ENCODE measurements at regions of chr15 and their contacts with region 1.

Region 1: DNA sequence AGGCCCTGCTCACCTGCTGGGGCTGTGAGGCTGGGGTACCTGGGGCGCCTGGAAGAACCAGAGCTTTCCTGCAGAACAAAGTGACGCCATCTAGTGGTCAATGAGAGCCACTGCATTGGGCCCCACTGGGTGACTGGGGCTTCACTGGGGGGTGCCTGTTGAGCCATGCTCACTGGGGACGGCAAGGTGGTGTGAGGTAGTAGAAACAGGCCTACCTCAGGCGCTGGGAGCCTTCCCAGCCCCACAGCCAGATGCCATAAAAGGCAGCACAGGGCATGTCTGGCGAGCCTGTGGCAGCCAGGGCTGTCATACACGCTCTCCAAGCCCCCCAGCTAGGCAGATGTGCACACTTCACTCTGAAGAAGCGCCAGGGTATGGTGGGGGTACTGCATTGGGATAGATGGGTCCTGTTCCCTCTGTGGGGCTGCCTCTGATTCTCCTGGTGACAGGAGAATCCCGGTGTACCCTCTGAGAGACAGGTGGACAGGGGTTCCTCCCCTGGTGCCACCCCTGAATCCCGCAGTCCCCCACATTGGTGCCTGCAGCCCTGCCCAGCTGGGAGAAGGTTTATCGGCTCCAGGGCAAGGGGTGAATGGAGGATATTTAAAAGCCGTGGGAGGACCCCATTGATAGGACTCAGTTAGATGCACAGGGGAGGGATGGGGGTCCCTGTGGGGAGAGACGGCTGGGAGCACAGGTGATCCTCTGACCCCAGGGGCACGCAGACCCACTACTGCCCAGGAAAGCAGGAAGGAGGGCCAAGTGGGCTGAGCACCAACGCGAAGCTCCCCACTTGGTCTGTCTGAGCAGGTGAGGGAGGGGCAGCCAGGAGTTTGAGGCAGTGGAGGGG is 178.8 kb downstream of the NSMCE3 start:
- DNase-seq: peak in 1 of 2 experiments; percentile 85
- H3K4me3 ChIP-seq: no peak overlapping the region
- H3K27ac ChIP-seq: no peak overlapping the region
- H3K4me1 ChIP-seq: peaks cover 0 to 5% (median 2%) of the 10 kb centered on the region in 4 experiments; a peak in 2 of 7 replicates
- H3K27me3 ChIP-seq: no peaks in the 10 kb centered on the region
- CTCF ChIP-seq: peak; percentile 85 to 92 (median 86)
- EP300 ChIP-seq: no peak
- POLR2A ChIP-seq: no peak
- RAD21 ChIP-seq: peak; percentile 66 to 78

Region 2: DNA sequence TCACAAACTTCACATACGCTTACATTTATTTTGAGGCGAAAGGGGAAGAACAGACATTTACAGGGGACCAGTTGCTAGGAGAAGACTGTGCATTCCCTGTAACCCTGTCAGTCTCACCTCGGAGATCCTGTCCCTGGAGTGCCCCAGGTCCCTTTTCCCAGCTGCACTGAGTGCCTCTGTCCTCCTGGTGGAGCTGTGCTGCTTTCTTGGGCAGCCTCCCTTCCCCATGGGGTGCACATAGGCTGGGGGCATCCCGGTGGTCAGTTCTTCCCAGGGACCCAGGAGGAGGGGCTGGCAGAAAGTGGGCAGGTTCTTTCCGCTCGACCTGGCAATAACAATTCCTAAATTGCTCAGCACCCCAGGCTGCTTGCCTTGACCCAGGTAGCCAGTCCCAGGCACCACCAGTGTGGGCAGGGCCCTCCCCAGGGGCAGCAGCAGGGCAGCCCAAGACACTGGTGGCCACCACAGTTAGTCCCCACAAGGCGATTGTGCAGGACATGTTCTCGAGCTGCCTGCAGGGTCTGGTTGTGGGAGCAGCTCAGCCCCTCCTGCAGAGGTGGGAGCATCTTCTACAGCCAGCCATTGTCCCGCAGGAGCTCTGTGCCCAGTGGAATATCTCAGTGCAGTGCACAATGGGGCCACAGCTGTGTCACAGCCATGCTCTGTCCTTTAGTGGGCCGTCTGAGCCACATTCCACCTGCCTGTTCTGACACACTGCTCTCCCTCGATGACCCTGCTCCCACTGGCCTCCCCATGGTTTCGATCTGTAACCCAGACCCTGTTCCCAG is 168.7 kb before region 1 on chr15:
- CTCF ChIA-PET with region 1: interaction called, 50 read pairs
- POLR2A ChIA-PET with region 1: no interaction called
- DNase-seq: no peak
- H3K4me3 ChIP-seq: no peak overlapping the region
- H3K27ac ChIP-seq: no peak overlapping the region
- H3K4me1 ChIP-seq: peaks cover 0 to 12% (median 7%) of the 10 kb centered on the region in 4 experiments; a peak in 5 of 7 replicates
- H3K27me3 ChIP-seq: no peaks in the 10 kb centered on the region
- CTCF ChIP-seq: peak; percentile 85 to 89 (median 87)
- EP300 ChIP-seq: no peak
- POLR2A ChIP-seq: no peak
- RAD21 ChIP-seq: peak; percentile 80 to 83

Region 3: GRCh38 chr15:28975766-28976179 is 115.1 kb before region 1 on chr15:
- CTCF ChIA-PET with region 1: interaction called, 46 read pairs
- POLR2A ChIA-PET with region 1: no interaction called
- DNase-seq: peak; percentile 29 to 72
- H3K4me3 ChIP-seq: no peak overlapping the region
- H3K27ac ChIP-seq: no peak overlapping the region
- H3K4me1 ChIP-seq: no peaks in the 10 kb centered on the region
- H3K27me3 ChIP-seq: no peaks in the 10 kb centered on the region
- CTCF ChIP-seq: peak; percentile 83 to 92 (median 90)
- EP300 ChIP-seq: no peak
- POLR2A ChIP-seq: no peak
- RAD21 ChIP-seq: peak; percentile 79

Region 4: GRCh38 chr15:28998511-28998910 is 92.3 kb before region 1 on chr15:
- CTCF ChIA-PET with region 1: interaction called, 88 read pairs
- POLR2A ChIA-PET with region 1: no interaction called
- DNase-seq: no peak
- H3K4me3 ChIP-seq: no peak overlapping the region
- H3K27ac ChIP-seq: no peak overlapping the region
- H3K4me1 ChIP-seq: peaks cover 0 to 6% (median 4%) of the 10 kb centered on the region in 4 experiments; a peak in 4 of 7 replicates
- H3K27me3 ChIP-seq: no peaks in the 10 kb centered on the region
- CTCF ChIP-seq: peak; percentile 11 to 22 (median 17); a peak in 3 of 4 replicates
- EP300 ChIP-seq: no peak
- POLR2A ChIP-seq: no peak
- RAD21 ChIP-seq: peak; percentile 46 to 55

Region 5: GRCh38 chr15:29029651-29030195 is 61.1 kb before region 1 on chr15:
- CTCF ChIA-PET with region 1: interaction called, 18 read pairs
- POLR2A ChIA-PET with region 1: no interaction called
- DNase-seq: no peak
- H3K4me3 ChIP-seq: no peak overlapping the region
- H3K27ac ChIP-seq: no peak overlapping the region
- H3K4me1 ChIP-seq: peaks cover 0 to 8% (median 4%) of the 10 kb centered on the region in 4 experiments; a peak in 4 of 7 replicates
- H3K27me3 ChIP-seq: no peaks in the 10 kb centered on the region
- CTCF ChIP-seq: no peak
- EP300 ChIP-seq: no peak
- POLR2A ChIP-seq: no peak
- RAD21 ChIP-seq: no peak

Region 6: GRCh38 chr15:29070449-29071231 is 20.2 kb before region 1 on chr15:
- CTCF ChIA-PET with region 1: interaction called, 78 read pairs
- POLR2A ChIA-PET with region 1: no interaction called
- DNase-seq: no peak
- H3K4me3 ChIP-seq: no peak overlapping the region
- H3K27ac ChIP-seq: no peak overlapping the region
- H3K4me1 ChIP-seq: no peaks in the 10 kb centered on the region
- H3K27me3 ChIP-seq: no peaks in the 10 kb centered on the region
- CTCF ChIP-seq: no peak
- EP300 ChIP-seq: no peak
- POLR2A ChIP-seq: no peak
- RAD21 ChIP-seq: no peak

Region 7: GRCh38 chr15:29170521-29170920 is 79.7 kb after region 1 on chr15:
- CTCF ChIA-PET with region 1: no interaction called
- POLR2A ChIA-PET with region 1: no interaction called
- DNase-seq: no peak
- H3K4me3 ChIP-seq: no peak overlapping the region
- H3K27ac ChIP-seq: no peak overlapping the region
- H3K4me1 ChIP-seq: no peaks in the 10 kb centered on the region
- H3K27me3 ChIP-seq: no peaks in the 10 kb centered on the region
- CTCF ChIP-seq: no peak
- EP300 ChIP-seq: no peak
- POLR2A ChIP-seq: no peak
- RAD21 ChIP-seq: no peak

Region 8: GRCh38 chr15:29337156-29337959 is 246.5 kb after region 1 on chr15:
- CTCF ChIA-PET with region 1: no interaction called
- POLR2A ChIA-PET with region 1: no interaction called
- DNase-seq: no peak
- H3K4me3 ChIP-seq: no peak overlapping the region
- H3K27ac ChIP-seq: no peak overlapping the region
- H3K4me1 ChIP-seq: peaks cover 0 to 5% (median 4%) of the 10 kb centered on the region in 4 experiments; a peak in 5 of 7 replicates
- H3K27me3 ChIP-seq: no peaks in the 10 kb centered on the region
- CTCF ChIP-seq: no peak
- EP300 ChIP-seq: no peak
- POLR2A ChIP-seq: no peak
- RAD21 ChIP-seq: no peak

Measured in H1 (cell line).